Heart right ventricle (tissue), 16 donors: ENCODE measurements at regions of chr17 and their contacts with region 1.

Region 1: DNA sequence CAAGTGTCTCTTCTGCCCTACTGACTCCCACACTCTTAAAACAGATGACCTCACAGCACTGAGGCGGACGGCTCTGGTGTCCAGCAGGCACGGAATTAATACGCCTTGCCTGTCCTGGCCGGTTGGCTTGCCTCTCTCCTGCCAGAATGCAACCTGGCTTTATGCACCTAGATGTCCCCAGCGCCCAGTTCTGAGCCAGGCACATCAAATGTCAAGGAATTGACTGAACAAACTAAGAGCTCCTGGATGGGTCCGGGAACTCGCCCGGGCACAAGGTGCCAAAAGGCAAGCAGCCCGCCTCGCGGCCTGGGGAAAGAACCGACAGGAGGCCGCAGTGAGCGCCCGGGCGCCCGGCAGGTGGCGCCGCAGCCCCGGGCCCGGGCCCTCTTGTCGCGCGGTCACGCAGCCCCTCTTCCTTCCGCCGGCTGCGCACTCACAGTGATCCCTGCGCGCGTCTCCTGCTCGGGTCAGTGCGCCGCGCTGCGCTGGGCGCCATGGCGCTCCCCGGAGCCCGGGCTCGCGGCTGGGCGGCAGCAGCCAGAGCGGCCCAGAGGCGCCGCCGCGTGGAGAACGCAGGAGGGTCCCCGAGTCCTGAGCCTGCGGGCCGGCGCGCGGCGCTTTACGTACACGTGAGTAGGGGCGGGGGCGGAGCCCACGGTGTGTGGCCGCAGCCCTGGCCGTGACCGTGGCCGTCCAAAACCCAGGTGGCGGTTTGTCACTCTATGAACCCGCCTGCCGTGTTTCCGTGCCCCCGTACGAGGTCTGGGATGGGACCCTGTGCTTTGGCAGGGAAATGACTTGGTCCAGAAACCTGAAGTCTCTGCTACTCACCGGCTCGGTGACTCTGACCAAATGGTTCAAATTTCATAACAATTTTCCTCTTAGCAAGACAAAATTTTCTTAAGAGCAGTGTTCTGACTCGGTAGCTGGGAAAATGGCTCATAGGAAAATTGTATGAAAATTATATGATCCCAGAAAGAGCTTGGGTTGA is at the start of gene RSAD1:
- DNase-seq: peak; percentile 84 to 88
- ATAC-seq: peak; percentile 82 to 93 (median 90)
- H3K4me3 ChIP-seq: peak within 1 kb of the TSS; percentile 52 to 89 (median 80)
- H3K27ac ChIP-seq: peak within 1 kb of the TSS; percentile 74 to 96 (median 91)
- H3K4me1 ChIP-seq: peaks cover 2 to 48% (median 34%) of the 10 kb centered on the region in 9 donors
- H3K27me3 ChIP-seq: peaks cover 0 to 6% (median 0%) of the 10 kb centered on the region in 7 donors
- CTCF ChIP-seq: peak; percentile 75 to 97 (median 94)
- total RNA-seq, gene RSAD1: 36.2 to 52.3 (median 45.5) TPM

Region 2: GRCh38 chr17:50425682-50426471 is 52.8 kb before region 1 on chr17 and contains the start of gene ACSF2:
- intact Hi-C with region 1: loop called in 1 of 10 experiments (anchors 5 kb)
- DNase-seq: peak; percentile 67 to 82
- ATAC-seq: peak; percentile 88 to 91 (median 90)
- H3K4me3 ChIP-seq: peak within 1 kb of the TSS; percentile 64 to 88 (median 78)
- H3K27ac ChIP-seq: peak within 1 kb of the TSS; percentile 44 to 88 (median 78)
- H3K4me1 ChIP-seq: peaks cover 9 to 59% (median 34%) of the 10 kb centered on the region in 9 donors
- H3K27me3 ChIP-seq: no peaks in the 10 kb centered on the region
- CTCF ChIP-seq: no peak
- total RNA-seq, gene ACSF2: 9.9 to 45.0 (median 19.7) TPM

Region 3: GRCh38 chr17:50443368-50443971 is 35.2 kb before region 1 on chr17:
- intact Hi-C with region 1: no loop called
- DNase-seq: no peak
- ATAC-seq: peak in 3 of 8 donors; percentile 45 to 63 (median 52)
- H3K4me3 ChIP-seq: no peak overlapping the region
- H3K27ac ChIP-seq: no peak overlapping the region
- H3K4me1 ChIP-seq: peaks cover 0 to 28% (median 10%) of the 10 kb centered on the region in 9 donors
- H3K27me3 ChIP-seq: no peaks in the 10 kb centered on the region
- CTCF ChIP-seq: no peak

Region 4: DNA sequence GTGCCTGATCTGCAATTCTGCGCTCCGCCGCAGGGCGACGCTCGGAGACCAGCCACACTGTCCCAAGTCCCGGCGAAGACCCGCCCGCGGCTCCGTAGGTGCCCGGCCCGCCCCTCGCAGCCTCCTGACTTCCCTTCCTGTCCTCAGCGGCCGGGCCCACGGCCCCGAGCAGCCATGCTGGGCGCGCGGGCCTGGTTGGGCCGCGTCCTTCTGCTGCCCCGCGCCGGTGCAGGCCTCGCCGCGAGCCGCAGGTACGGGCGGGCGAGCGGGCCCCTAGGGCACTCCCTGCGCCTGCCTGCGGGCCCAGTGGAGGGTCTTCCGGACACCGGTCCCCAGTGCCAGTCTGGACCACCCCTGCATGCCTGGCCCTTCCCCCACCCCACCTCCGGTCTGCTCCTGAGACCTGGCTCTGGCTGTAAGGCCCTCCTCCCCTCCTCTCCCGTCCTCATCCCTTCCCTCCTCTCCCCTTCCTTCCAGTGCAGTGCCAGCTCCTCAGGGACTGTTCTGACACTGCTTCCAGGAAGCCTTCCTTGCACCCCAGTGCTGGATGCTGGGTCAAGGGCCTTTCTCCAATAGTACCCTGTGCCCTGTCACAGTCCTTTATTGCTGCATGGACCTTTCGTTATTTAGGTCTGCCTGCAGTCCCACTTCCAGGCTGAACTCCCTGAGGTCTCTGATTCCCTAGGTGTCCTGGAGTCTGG is 68.5 kb after region 1 on chr17 and contains the start of gene SPATA20:
- intact Hi-C with region 1: loop called in 6 of 10 experiments (anchors 2 to 5 kb)
- DNase-seq: peak; percentile 89 to 93
- ATAC-seq: peak; percentile 85 to 93 (median 88)
- H3K4me3 ChIP-seq: peak within 1 kb of the TSS; percentile 43 to 74 (median 66)
- H3K27ac ChIP-seq: peak within 1 kb of the TSS; percentile 6 to 94 (median 82)
- H3K4me1 ChIP-seq: peaks cover 0 to 37% (median 21%) of the 10 kb centered on the region in 9 donors
- H3K27me3 ChIP-seq: no peaks in the 10 kb centered on the region
- CTCF ChIP-seq: peak; percentile 95 to 100 (median 98)
- total RNA-seq, gene SPATA20: 18.5 to 80.6 (median 63.3) TPM

Region 5: DNA sequence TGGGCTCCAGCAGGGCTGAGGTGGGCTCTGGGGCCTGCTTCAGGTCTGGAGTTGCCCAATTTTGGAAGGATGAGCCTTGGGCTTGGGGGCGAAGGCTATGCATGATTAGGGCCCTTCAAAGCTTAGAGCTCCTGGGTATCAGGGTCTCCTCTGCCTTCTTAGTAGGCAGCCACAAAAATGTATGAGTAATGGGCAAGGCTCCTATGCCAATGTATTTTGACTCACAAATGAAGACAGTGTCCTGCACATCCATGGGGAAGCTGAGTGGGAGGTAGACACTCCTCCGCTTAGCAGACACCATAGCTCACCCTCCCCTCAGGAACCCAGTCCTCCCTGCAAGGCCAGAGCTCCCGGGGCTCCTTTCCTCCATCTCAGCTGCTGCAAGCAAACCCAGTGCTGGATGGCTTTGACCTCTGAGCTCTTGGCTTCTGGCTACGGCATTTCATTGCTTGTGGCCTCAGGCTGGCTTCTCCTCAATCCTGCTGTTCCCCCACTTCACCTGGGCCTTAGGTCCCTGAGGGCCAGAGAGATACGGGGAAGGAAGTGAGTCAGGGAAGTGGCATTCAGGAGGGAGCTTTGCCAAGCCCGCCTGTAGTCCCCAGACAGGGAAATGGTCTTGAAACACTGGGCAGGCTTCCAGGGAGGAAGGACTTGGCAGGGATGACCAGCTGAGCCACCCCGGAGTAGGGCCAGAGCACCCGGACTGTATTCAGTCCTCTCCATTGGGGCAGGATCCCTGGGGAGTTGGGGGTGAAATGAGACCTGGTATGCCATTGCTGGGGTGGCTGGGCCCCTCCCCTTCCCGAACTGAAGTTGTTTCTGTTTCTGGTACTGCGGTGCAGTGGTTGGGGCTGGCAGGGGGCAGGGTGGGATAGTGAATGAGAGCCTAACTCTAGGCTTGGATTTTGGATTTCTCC is 160.4 kb after region 1 on chr17:
- intact Hi-C with region 1: loop called in 1 of 10 experiments (anchors 5 kb)
- DNase-seq: peak; percentile 82 to 90
- ATAC-seq: peak; percentile 66 to 90 (median 86)
- H3K4me3 ChIP-seq: no peak overlapping the region
- H3K27ac ChIP-seq: peak overlapping the region in 3 of 10 donors; percentile 13 to 75 (median 23)
- H3K4me1 ChIP-seq: peaks cover 8 to 60% (median 28%) of the 10 kb centered on the region in 9 donors
- H3K27me3 ChIP-seq: peaks cover 12 to 32% (median 28%) of the 10 kb centered on the region in 7 donors
- CTCF ChIP-seq: no peak

Region 6: GRCh38 chr17:50707289-50708049 is 228.8 kb after region 1 on chr17 and contains the start of gene ANKRD40:
- intact Hi-C with region 1: loop called in 1 of 10 experiments (anchors 5 kb)
- DNase-seq: peak; percentile 87 to 93
- ATAC-seq: peak; percentile 84 to 92 (median 90)
- H3K4me3 ChIP-seq: peak within 1 kb of the TSS; percentile 69 to 85 (median 76)
- H3K27ac ChIP-seq: peak within 1 kb of the TSS; percentile 84 to 98 (median 96)
- H3K4me1 ChIP-seq: peaks cover 8 to 63% (median 50%) of the 10 kb centered on the region in 9 donors
- H3K27me3 ChIP-seq: no peaks in the 10 kb centered on the region
- CTCF ChIP-seq: no peak
- total RNA-seq, gene ANKRD40: 39.0 to 56.8 (median 43.6) TPM